Vagina (tissue), 2 donors: ENCODE measurements at regions of chr10 and their contacts with region 1.

Region 1: DNA sequence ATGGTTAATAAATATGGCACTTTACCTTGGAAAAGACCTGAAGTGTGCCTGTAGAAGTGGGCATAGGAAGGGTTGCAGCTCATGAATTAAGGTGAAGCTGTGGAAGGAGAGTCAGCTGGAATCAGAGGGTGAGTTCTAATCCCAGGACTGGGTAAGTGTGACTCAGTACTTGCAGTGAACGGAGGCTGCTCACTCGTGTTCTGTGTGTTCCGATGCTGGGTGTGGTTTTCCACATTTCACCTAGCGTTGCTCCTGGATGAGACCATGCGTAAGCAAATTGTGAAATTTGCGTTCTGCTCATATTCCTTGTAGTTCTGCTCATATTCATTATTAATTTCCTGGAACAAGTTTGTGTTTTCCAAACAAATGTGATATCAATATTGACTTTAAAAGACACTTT is 22.4 kb upstream of the TMEM236 start:
- DNase-seq: no peak
- H3K4me3 ChIP-seq: no peak overlapping the region
- H3K27ac ChIP-seq: no peak overlapping the region
- H3K4me1 ChIP-seq: no peaks in the 10 kb centered on the region
- H3K27me3 ChIP-seq: no peaks in the 10 kb centered on the region
- CTCF ChIP-seq: no peak
- POLR2A ChIP-seq: no peak

Region 2: GRCh38 chr10:16116404-16117304 is 1613.0 kb before region 1 on chr10:
- intact Hi-C with region 1: loop called (anchors 5 kb)
- DNase-seq: no peak
- H3K4me3 ChIP-seq: no peak overlapping the region
- H3K27ac ChIP-seq: no peak overlapping the region
- H3K4me1 ChIP-seq: no peaks in the 10 kb centered on the region
- H3K27me3 ChIP-seq: no peaks in the 10 kb centered on the region
- CTCF ChIP-seq: no peak
- POLR2A ChIP-seq: no peak

Region 3: GRCh38 chr10:17787078-17787961 is 57.7 kb after region 1 on chr10:
- intact Hi-C with region 1: no loop called
- DNase-seq: no peak
- H3K4me3 ChIP-seq: no peak overlapping the region
- H3K27ac ChIP-seq: no peak overlapping the region
- H3K4me1 ChIP-seq: no peaks in the 10 kb centered on the region
- H3K27me3 ChIP-seq: no peaks in the 10 kb centered on the region
- CTCF ChIP-seq: no peak
- POLR2A ChIP-seq: no peak